Psoas muscle (tissue), 8 donors: ENCODE measurements at regions of chr10 and their contacts with region 1.

Region 1: GRCh38 chr10:31819391-31819820 is 109.2 kb downstream of the ARHGAP12 start:
- DNase-seq: peak; percentile 37 to 73
- ATAC-seq: peak; percentile 83 to 92 (median 90)
- H3K4me3 ChIP-seq: no peak overlapping the region
- H3K27ac ChIP-seq: peak overlapping the region; percentile 71
- H3K4me1 ChIP-seq: peaks cover 26% of the 10 kb centered on the region
- H3K27me3 ChIP-seq: no peaks in the 10 kb centered on the region
- CTCF ChIP-seq: no peak

Region 2: GRCh38 chr10:30751678-30752331 is 1067.6 kb before region 1 on chr10:
- intact Hi-C with region 1: loop called in 1 of 2 experiments (anchors 10 kb)
- DNase-seq: peak; percentile 81 to 89
- ATAC-seq: peak; percentile 77 to 97 (median 88)
- H3K4me3 ChIP-seq: no peak overlapping the region
- H3K27ac ChIP-seq: no peak overlapping the region
- H3K4me1 ChIP-seq: no peaks in the 10 kb centered on the region
- H3K27me3 ChIP-seq: no peaks in the 10 kb centered on the region
- CTCF ChIP-seq: peak; percentile 87

Region 3: DNA sequence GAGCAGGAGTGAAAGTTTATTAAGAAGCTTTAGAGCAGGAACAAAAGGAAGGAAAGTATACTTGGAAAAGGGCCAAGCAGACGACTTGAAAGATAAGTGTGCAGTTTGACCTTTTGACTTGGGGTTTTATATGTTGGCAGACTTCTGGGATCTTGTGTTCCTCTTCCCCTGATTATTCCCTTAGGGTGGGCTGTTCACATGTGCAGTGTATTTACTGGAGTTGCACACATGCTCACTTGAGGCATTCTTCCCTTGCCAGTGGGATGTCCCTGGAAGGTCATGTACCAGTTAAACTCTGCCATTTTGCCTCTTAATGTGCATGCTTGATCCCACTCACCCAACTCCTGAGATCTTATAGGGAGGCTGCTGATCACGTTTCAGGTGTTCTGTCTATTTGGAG is 132.7 kb after region 1 on chr10:
- intact Hi-C with region 1: no loop called
- DNase-seq: no peak
- ATAC-seq: no peak
- H3K4me3 ChIP-seq: no peak overlapping the region
- H3K27ac ChIP-seq: no peak overlapping the region
- H3K4me1 ChIP-seq: no peaks in the 10 kb centered on the region
- H3K27me3 ChIP-seq: no peaks in the 10 kb centered on the region
- CTCF ChIP-seq: no peak